ENCODE measurements at regions of chr22 and their contacts with region 1.

Region 1: GRCh38 chr22:37594237-37594636 is 14.3 kb upstream of the LGALS2 start:
- DNase-seq: no peak
- ATAC-seq: no peak
- H3K4me3 Mint-ChIP-seq: no peak overlapping the region
- H3K27ac Mint-ChIP-seq: no peak overlapping the region
- H3K4me1 Mint-ChIP-seq: peaks cover 11% of the 10 kb centered on the region
- H3K27me3 Mint-ChIP-seq: no peaks in the 10 kb centered on the region
- CTCF ChIP-seq: no peak

Region 2: DNA sequence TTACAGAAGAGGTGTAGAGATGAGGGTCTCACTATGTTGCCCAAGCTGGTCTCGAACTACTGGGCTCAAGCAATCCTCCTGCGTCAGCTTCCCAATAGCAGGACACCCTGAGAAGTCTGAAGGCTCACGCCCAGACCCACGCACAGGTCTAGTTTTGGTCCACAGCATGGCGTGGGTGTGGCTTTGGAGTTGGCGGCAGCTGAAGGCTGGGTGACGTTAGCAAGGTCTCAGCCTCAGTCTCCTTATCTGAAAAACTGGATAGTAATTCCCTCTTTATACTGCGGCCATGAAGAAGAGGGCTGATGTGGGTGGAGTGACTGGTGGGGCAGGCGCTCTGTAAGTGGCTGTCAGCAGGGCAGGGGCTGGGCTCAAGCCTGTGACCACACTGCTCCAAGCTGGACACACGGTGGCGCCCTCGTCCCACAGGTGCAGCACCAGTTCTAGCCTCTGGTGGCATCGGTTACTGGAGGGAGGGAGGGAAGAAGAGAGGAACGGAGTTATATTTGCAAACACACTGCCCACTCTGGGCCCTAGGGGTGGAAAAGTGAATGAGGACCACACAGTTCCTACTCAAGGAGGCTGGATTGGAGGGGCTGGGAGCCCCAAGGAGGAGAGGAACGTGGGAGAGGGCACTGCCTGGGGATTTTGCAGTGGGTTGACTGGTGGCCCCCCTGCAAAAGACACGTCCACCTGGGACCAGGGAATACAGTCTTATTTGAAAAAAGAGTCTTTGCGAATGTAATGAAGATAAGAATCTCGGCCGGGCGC is 55.5 kb before region 1 on chr22:
- CTCF ChIA-PET with region 1: interaction called, 31 read pairs
- POLR2A ChIA-PET with region 1: interaction called, 4 read pairs
- intact Hi-C with region 1: loop called (anchors 1 kb)
- DNase-seq: peak; percentile 81
- ATAC-seq: peak; percentile 100
- H3K4me3 Mint-ChIP-seq: peak overlapping the region; percentile 24
- H3K27ac Mint-ChIP-seq: peak overlapping the region; percentile 41
- H3K4me1 Mint-ChIP-seq: peaks cover 28% of the 10 kb centered on the region
- H3K27me3 Mint-ChIP-seq: peaks cover 21% of the 10 kb centered on the region
- CTCF ChIP-seq: peak; percentile 74

Measured in activated B cell treated with CpG ODN at 0.5 μM for 24 hours (primary cell).